ENCODE measurements at regions of chr2 and their contacts with region 1.

Region 1: GRCh38 chr2:46876741-46877384 is 38.7 kb downstream of the MCFD2 start:
- DNase-seq: no peak
- H3K4me3 ChIP-seq: no peak overlapping the region
- H3K27ac ChIP-seq: no peak overlapping the region
- H3K4me1 ChIP-seq: 0 out of 7 replicates have a peak, but pooled peaks cover 0 to 2% (median 0%) of the 10 kb centered on the region in 4 experiments
- H3K27me3 ChIP-seq: no peaks in the 10 kb centered on the region
- CTCF ChIP-seq: peak in 1 of 3 experiments; percentile 33; a peak in 1 of 4 replicates
- EP300 ChIP-seq: no peak
- POLR2A ChIP-seq: no peak
- RAD21 ChIP-seq: peak; percentile 36 to 48; a peak in 3 of 4 replicates

Region 2: GRCh38 chr2:46802665-46803546 is 74.0 kb before region 1 on chr2:
- CTCF ChIA-PET with region 1: no interaction called
- POLR2A ChIA-PET with region 1: no interaction called
- DNase-seq: no peak
- H3K4me3 ChIP-seq: no peak overlapping the region
- H3K27ac ChIP-seq: no peak overlapping the region
- H3K4me1 ChIP-seq: no peaks in the 10 kb centered on the region
- H3K27me3 ChIP-seq: no peaks in the 10 kb centered on the region
- CTCF ChIP-seq: no peak
- EP300 ChIP-seq: no peak
- POLR2A ChIP-seq: no peak
- RAD21 ChIP-seq: no peak

Region 3: DNA sequence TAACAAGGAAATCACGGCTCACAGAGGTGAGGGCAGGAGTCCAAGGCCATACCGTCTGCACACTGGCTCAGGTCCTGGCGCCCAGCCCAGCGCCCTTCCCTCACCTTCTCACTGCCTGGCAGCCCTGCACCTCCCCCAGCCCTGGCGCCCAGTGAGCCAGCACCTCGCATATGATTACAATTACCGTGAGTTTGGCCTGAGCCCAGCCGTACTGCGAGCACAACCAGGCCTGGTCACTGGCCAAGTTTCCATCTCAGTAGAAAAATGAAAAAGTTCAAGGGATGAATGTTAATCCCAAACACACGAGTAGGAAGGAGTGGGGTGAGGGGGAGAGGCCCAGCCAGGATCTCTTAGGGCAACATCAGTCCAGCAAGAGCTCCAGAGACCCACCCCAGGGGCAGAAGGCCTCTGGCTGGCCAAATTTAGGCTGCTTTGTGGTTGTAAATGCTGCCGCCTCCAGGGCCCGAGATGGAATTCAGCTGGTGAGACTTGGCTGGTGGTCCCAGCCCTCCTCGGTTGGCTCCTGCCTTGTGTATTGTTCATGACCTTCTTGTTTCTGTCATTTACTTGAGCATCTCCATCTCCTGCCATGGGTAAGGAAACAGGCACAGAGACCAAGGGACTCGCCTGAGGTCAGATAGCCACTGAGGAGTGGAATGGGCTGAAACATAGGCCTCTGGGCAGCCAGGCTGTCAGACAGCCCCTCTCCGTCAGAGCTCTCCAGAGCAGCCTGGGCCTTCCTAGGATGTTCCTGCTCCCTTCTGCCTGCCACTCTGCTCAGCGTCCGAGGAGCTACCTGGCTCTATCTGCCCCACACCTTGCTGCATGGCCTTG is 29.4 kb before region 1 on chr2:
- CTCF ChIA-PET with region 1: no interaction called
- POLR2A ChIA-PET with region 1: no interaction called
- DNase-seq: no peak
- H3K4me3 ChIP-seq: no peak overlapping the region
- H3K27ac ChIP-seq: no peak overlapping the region
- H3K4me1 ChIP-seq: peaks cover 0 to 2% (median 0%) of the 10 kb centered on the region in 4 experiments; a peak in 1 of 7 replicates
- H3K27me3 ChIP-seq: no peaks in the 10 kb centered on the region
- CTCF ChIP-seq: no peak
- EP300 ChIP-seq: no peak
- POLR2A ChIP-seq: no peak
- RAD21 ChIP-seq: 0 out of 4 replicates have a peak, but pooled peaks of 1 of the 2 experiments have one; percentile 5

Region 4: GRCh38 chr2:46863295-46864281 is 13.3 kb before region 1 on chr2:
- CTCF ChIA-PET with region 1: interaction called, 24 read pairs
- POLR2A ChIA-PET with region 1: no interaction called
- DNase-seq: no peak
- H3K4me3 ChIP-seq: no peak overlapping the region
- H3K27ac ChIP-seq: no peak overlapping the region
- H3K4me1 ChIP-seq: no peaks in the 10 kb centered on the region
- H3K27me3 ChIP-seq: no peaks in the 10 kb centered on the region
- CTCF ChIP-seq: no peak
- EP300 ChIP-seq: no peak
- POLR2A ChIP-seq: no peak
- RAD21 ChIP-seq: no peak

Region 5: GRCh38 chr2:46887028-46887885 is 10.4 kb after region 1 on chr2:
- CTCF ChIA-PET with region 1: interaction called, 22 read pairs
- POLR2A ChIA-PET with region 1: interaction called, 4 read pairs
- DNase-seq: no peak
- H3K4me3 ChIP-seq: no peak overlapping the region
- H3K27ac ChIP-seq: no peak overlapping the region
- H3K4me1 ChIP-seq: peaks cover 0 to 7% (median 1%) of the 10 kb centered on the region in 4 experiments; a peak in 1 of 7 replicates
- H3K27me3 ChIP-seq: no peaks in the 10 kb centered on the region
- CTCF ChIP-seq: no peak
- EP300 ChIP-seq: no peak
- POLR2A ChIP-seq: no peak
- RAD21 ChIP-seq: no peak